Head of caudate nucleus (tissue), 42 donors: ENCODE measurements at regions of chr20 and their contacts with region 1.

Region 1: GRCh38 chr20:44475694-44476560 is at the start of gene TTPAL:
- DNase-seq: peak; percentile 62 to 95 (median 88)

Region 2: GRCh38 chr20:43699941-43700565 is 775.9 kb before region 1 on chr20:
- intact Hi-C with region 1: no loop called
- DNase-seq: no peak

Region 3: GRCh38 chr20:44370639-44371220 is 105.2 kb before region 1 on chr20:
- intact Hi-C with region 1: no loop called
- DNase-seq: no peak

Region 4: DNA sequence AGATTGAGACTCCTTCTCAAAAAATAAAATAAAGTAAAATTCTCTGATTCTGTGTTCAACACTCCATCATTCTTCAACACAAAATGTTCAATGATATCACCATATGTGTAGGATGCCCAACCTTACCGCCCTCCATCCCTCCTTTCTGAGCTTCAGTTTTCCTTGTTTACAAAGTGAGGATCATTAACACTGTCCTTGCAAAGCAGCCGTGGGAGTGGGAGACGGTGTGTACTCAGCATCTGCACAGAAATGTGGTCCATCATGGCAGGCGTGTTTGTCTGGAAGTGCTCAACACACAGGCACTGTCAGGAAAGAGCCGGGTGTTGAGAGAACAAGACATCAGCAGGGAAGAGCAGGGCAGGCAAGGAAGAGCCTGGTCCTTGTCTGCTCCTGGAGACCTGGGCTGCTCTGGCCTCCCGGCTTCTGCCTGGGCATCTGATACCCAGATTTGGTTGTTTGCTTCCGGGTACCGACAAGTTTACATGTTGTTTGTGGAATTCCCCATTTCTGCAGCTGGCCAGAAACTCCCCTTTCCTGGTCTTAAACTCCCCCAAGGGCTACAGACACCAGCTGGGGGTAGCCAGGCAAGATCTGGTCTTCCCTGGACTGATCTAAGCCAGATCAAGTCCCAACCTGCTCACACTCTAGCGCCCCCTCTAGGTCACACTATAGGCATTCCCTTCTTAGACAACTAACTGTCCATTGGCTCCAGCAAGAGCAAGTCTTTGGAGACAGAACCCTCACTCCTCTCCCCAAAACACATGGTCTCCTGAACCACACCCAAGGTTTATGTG is 27.0 kb before region 1 on chr20:
- intact Hi-C with region 1: no loop called
- DNase-seq: no peak

Region 5: DNA sequence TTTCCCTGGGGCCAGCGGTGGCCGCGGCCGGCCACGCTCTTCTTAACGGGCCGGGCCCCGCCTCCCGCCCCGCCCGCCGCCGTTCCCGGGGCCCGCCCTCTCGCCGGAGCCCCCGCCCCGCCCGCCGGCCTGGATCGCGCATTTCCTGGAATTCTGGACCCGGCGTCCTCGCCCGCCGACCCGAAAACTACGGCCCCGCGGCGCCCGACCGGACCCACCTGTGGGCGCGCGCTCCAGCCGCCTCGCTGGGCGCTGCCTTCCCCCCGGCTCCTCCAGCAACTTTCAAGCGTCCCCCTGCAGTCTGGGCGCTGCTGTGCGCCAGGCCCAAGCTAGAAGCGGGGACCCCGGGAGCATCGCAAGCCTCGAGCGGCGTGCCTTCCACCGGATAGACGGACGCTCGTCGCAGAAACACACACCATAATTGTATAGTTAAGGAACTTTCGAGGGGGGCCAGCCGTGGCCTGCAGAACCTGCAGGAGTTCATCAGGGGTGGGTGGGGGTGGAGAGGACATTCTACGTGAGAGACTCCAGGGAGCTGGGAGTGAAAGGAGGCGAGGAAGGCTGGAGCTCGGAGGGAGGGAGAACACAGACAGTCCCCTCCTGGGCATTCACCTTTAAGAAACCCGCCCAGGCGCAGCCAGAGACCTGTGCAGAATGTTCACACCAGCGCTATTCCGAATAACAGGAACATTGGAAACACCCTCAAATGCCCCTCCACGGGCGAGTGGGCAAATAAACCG is 175.9 kb after region 1 on chr20 and contains the start of gene ADA:
- intact Hi-C with region 1: loop called (anchors 5 kb)
- DNase-seq: peak in 39 of 42 donors; percentile 22 to 85 (median 61)